GM10248 (cell line): ENCODE measurements at regions of chr13 and their contacts with region 1.

Region 1: GRCh38 chr13:20495082-20496023 is 30.3 kb downstream of the CRYL1 start:
- DNase-seq: peak; percentile 72
- CTCF ChIP-seq: peak; percentile 86

Region 2: GRCh38 chr13:20197361-20197834 is 298.0 kb before region 1 on chr13:
- CTCF ChIA-PET with region 1: interaction called, 11 read pairs
- POLR2A ChIA-PET with region 1: no interaction called
- DNase-seq: peak; percentile 50
- CTCF ChIP-seq: peak; percentile 66

Region 3: GRCh38 chr13:20482275-20482761 is 13.0 kb before region 1 on chr13:
- CTCF ChIA-PET with region 1: interaction called, 33 read pairs
- POLR2A ChIA-PET with region 1: no interaction called
- DNase-seq: no peak
- CTCF ChIP-seq: no peak

Region 4: DNA sequence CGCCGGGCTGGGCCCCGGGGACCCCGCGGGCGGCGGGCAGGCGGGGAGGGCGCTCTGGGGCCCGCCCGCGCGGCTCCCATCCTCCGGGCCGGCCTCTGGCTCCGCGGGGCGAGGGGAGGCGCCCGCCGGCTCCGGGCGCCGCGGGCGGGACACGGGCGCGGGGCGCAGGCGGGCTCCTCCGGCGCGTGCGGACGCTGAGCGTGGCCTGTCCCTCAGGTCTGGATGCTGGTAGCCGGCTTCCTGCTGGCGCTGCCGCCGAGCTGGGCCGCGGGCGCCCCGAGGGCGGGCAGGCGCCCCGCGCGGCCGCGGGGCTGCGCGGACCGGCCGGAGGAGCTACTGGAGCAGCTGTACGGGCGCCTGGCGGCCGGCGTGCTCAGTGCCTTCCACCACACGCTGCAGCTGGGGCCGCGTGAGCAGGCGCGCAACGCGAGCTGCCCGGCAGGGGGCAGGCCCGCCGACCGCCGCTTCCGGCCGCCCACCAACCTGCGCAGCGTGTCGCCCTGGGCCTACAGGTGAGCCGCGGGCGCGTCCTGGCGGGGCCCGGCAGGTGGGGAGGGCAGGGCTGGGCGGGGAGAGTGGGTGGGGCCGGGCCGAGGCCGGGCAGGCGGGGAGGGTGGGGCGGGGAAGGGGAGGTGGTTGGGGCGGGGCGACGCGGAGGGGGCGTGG is 208.6 kb after region 1 on chr13:
- CTCF ChIA-PET with region 1: interaction called, 12 read pairs
- POLR2A ChIA-PET with region 1: no interaction called
- DNase-seq: peak; percentile 90
- CTCF ChIP-seq: peak; percentile 67

Region 5: GRCh38 chr13:20924758-20925394 is 429.5 kb after region 1 on chr13:
- CTCF ChIA-PET with region 1: interaction called, 165 read pairs
- POLR2A ChIA-PET with region 1: no interaction called
- DNase-seq: peak; percentile 56
- CTCF ChIP-seq: peak; percentile 79